HEK293 (cell line): ENCODE measurements at regions of chr14 and their contacts with region 1.

Region 1: GRCh38 chr14:33792720-33793368 is 158.0 kb downstream of the EGLN3 start:
- H3K4me3 ChIP-seq: no peak overlapping the region
- H3K27ac ChIP-seq: no peak overlapping the region
- H3K4me1 ChIP-seq: no peaks in the 10 kb centered on the region; the same call in 1 of the 2 replicates
- CTCF ChIP-seq: peak; percentile 76

Region 2: DNA sequence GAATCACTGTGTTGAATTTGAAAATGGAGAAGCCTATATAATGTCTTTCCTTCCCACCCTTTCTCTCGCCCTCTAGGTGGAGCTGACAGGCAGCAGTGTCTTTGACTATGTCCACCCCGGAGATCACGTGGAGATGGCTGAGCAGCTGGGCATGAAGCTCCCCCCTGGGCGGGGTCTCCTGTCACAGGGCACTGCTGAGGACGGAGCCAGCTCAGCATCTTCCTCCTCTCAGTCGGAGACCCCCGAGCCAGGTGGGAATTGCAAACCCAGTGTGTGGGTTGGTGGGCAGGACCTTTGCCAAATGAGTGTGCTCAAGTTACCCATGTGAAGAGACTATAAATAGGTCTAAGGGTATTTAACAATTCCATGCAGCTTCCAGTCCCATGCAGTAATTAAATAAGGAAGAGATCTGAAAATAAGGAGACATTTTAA is 116.7 kb before region 1 on chr14:
- CTCF ChIA-PET with region 1: interaction called, 33 read pairs
- POLR2A ChIA-PET with region 1: no interaction called
- H3K4me3 ChIP-seq: no peak overlapping the region
- H3K27ac ChIP-seq: no peak overlapping the region
- H3K4me1 ChIP-seq: no peaks in the 10 kb centered on the region
- CTCF ChIP-seq: 0 out of 2 replicates have a peak, but pooled peaks have one; percentile 12

Region 3: GRCh38 chr14:33781265-33781664 is 11.6 kb before region 1 on chr14:
- CTCF ChIA-PET with region 1: interaction called, 10 read pairs
- POLR2A ChIA-PET with region 1: no interaction called
- H3K4me3 ChIP-seq: no peak overlapping the region
- H3K27ac ChIP-seq: no peak overlapping the region
- H3K4me1 ChIP-seq: peaks cover 18% of the 10 kb centered on the region
- CTCF ChIP-seq: no peak

Region 4: GRCh38 chr14:33879684-33880286 is 86.9 kb after region 1 on chr14:
- CTCF ChIA-PET with region 1: no interaction called
- POLR2A ChIA-PET with region 1: no interaction called
- H3K4me3 ChIP-seq: no peak overlapping the region
- H3K27ac ChIP-seq: no peak overlapping the region
- H3K4me1 ChIP-seq: no peaks in the 10 kb centered on the region
- CTCF ChIP-seq: no peak